ENCODE measurements at regions of chr1 and their contacts with region 1.

Region 1: DNA sequence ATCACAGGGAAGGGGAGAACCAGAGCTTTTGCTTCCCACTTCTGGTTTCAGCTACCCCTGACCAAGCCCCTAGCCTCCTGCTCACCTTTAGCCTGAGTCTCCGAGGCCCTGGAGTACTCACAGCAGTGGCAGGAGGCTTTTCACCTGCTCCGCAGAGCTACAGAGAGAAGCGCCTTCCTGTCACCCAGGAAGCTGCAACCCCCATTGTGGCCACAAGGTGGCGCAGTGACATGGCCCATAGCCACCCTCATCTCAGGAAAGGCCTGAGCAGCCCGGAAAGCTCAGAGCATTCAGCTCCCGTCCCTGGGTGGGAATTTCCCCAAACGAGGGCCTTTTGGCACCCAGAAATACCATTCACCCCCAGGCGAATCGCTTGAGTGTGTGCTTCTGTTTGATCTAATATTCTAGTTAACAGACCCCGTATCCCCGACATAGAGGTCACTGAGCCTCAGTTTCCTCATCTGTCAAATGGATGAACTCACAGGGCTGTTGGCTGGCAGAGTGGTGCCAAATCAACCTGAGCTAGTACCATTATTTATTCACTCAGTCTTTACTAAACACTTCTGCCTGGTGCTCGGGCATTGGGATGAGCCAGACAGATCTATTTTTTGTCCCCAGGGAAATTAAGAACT is 25.3 kb downstream of the A3GALT2 start:
- DNase-seq: peak; percentile 79
- H3K4me3 Mint-ChIP-seq: no peak overlapping the region
- H3K27ac Mint-ChIP-seq: no peak overlapping the region
- H3K4me1 Mint-ChIP-seq: peaks cover 8% of the 10 kb centered on the region
- H3K27me3 Mint-ChIP-seq: no peaks in the 10 kb centered on the region

Region 2: DNA sequence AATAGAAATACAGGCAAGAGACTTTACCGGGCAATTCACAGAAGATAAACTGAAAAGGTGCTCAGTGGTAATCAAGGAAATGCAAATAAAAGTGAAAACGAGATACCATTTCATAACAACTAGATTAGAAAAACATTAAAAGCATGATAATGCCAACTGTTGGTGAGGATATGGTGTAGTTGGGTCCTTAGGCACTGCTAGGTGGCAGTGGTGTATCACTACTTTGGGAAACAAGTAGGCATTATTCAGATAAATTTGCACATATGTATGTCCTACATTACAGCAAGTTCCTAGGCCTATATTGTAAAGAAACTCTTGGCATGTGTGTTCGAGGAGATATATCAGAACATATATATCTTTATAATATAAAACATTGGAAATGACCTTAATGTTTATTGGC is 183.6 kb before region 1 on chr1:
- intact Hi-C with region 1: loop called (anchors 5 kb)
- DNase-seq: no peak
- H3K4me3 Mint-ChIP-seq: no peak overlapping the region
- H3K27ac Mint-ChIP-seq: no peak overlapping the region
- H3K4me1 Mint-ChIP-seq: peaks cover 10% of the 10 kb centered on the region
- H3K27me3 Mint-ChIP-seq: peaks cover 3% of the 10 kb centered on the region

Region 3: DNA sequence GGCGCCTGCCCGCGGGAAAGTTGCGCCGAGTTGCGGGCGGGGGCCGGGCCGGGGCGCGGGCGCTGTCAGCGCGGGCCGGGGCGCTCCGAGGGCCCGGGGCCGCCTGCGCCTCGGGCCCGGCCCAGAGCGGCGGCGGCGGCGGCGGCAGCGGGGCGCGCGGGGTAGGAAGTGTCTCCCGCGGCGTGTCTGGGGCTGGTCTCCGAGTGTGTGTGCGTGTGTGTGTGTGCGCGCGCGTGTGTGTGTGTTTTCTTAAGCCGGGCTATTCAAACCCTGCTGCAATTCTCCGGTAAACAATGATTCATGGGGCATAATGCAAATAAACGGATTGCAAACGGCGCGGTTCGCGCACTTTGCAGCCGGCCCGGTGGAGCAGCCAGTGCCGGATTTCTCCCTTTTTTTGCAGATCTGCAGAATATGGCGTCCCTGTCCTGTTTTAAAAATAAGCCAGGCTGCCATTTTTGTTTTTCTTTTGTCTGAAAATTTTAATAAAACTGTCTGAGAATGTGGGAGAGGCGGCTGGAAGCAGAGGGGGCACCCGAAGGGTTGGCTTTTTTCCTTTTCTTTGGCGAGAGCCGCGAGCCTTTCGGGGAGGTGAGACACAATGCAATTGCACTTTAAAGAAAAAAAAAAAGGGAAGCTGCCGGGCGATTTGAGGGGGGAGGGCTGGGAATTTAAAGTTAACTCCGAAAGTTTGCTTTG is 38.7 kb before region 1 on chr1:
- intact Hi-C with region 1: loop called (anchors 5 kb)
- DNase-seq: peak; percentile 41
- H3K4me3 Mint-ChIP-seq: peak overlapping the region; percentile 92
- H3K27ac Mint-ChIP-seq: peak overlapping the region; percentile 98
- H3K4me1 Mint-ChIP-seq: peaks cover 34% of the 10 kb centered on the region
- H3K27me3 Mint-ChIP-seq: peaks cover 11% of the 10 kb centered on the region

Region 4: DNA sequence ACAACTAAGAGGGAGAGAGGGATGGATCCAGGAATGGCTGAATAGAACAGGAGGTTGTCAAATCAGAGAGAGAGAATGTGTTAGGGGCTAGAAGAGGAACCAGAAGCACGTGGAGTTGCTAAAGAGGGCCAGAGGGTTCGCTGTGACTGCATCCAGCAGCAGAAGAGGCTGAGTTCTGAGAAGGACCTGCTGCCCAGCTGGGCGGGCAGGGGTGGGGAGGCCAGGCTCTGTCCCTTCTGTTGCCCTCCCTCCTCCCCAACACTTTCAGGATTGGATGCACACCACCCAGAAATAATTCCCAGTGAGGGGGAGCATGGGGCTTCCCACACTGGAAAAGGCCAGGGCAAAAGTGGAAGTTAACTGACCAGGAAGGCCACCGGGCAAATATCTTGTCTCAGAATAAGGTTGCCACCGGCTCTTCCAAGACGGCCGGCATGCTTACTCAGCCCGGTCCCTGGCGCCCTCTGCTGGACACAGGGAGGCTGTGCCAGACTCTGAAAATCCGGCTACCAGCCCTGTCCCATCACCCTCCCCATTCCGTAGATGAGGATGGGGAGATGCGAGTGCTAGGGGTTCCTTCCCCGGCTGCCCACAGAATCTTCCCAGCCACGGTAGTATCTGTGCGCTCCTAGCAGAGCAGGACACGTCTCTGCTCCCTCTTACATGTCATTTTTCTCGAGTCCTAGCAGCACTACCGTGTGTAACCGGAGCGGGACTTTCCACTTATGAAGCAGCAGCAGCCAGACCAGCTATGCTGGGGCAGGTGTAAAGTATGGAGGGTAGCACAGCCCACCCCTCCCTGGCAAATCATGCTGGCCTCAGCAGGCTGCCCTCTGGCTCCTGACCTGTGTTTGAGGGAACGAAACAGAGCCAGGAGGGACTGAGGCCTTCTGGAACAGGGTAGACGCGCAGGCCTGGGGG is 72.2 kb after region 1 on chr1:
- intact Hi-C with region 1: loop called (anchors 1 kb)
- DNase-seq: peak; percentile 73
- H3K4me3 Mint-ChIP-seq: no peak overlapping the region
- H3K27ac Mint-ChIP-seq: no peak overlapping the region
- H3K4me1 Mint-ChIP-seq: no peaks in the 10 kb centered on the region
- H3K27me3 Mint-ChIP-seq: peaks cover 2% of the 10 kb centered on the region

Measured in activated T-helper 1 cell treated with anti-CD3 and anti-CD28 coated beads, Interleukin-12 subunit alpha, Interleukin-12 subunit beta, Interleukin-2, Interleukin-4 antibody, amounts not matched to agents 30 ng/mL and 10 ng/mL and 1 ng/mL, durations not matched to agents 14 hours and 24 hours and 36 hours (primary cell).